ENCODE measurements at regions of chr1 and their contacts with region 1.

Region 1: GRCh38 chr1:222814536-222815439 is at the start of gene DISP1:
- DNase-seq: peak; percentile 96
- ATAC-seq: peak; percentile 74
- H3K4me3 ChIP-seq: peak within 1 kb of the TSS; percentile 67
- H3K27ac ChIP-seq: peak within 1 kb of the TSS; percentile 73
- H3K4me1 ChIP-seq: peaks cover 38% of the 10 kb centered on the region
- H3K27me3 ChIP-seq: no peaks in the 10 kb centered on the region
- CTCF ChIP-seq: no peak
- total RNA-seq, gene DISP1: 0.63 and 1.3 TPM in 2 replicates

Region 2: GRCh38 chr1:222331340-222331739 is 483.4 kb before region 1 on chr1:
- CTCF ChIA-PET with region 1: no interaction called
- POLR2A ChIA-PET with region 1: no interaction called
- intact Hi-C with region 1: no loop called
- DNase-seq: no peak
- ATAC-seq: no peak
- H3K4me3 ChIP-seq: no peak overlapping the region
- H3K27ac ChIP-seq: no peak overlapping the region
- H3K4me1 ChIP-seq: no peaks in the 10 kb centered on the region
- H3K27me3 ChIP-seq: peaks cover 2% of the 10 kb centered on the region; the same call in 1 of the 2 replicates
- CTCF ChIP-seq: no peak

Region 3: DNA sequence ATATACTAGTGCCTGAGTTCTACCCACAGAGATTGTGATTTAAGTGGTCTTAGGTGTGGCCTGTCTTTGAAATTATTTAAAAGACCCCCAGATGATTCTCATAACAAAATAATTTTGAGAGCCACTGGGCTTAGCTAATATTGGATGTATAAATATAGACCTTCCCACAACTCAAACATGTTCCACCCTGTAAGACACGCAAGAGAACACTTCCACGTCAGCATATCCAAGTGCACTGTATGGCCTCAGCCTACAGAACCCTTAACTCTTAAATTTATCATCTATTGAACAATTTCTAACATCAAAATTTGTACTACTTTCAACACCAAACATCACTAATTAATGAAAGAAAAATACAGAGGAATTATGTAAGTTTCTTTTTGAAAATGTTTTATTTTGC is 75.3 kb before region 1 on chr1:
- CTCF ChIA-PET with region 1: no interaction called
- POLR2A ChIA-PET with region 1: no interaction called
- intact Hi-C with region 1: loop called (anchors 2 kb)
- DNase-seq: no peak
- ATAC-seq: no peak
- H3K4me3 ChIP-seq: no peak overlapping the region
- H3K27ac ChIP-seq: no peak overlapping the region
- H3K4me1 ChIP-seq: peaks cover 17% of the 10 kb centered on the region
- H3K27me3 ChIP-seq: no peaks in the 10 kb centered on the region
- CTCF ChIP-seq: no peak

Region 4: GRCh38 chr1:222798116-222798515 is 16.7 kb before region 1 on chr1:
- CTCF ChIA-PET with region 1: no interaction called
- POLR2A ChIA-PET with region 1: interaction called, 11 read pairs
- intact Hi-C with region 1: loop called (anchors 2 kb)
- DNase-seq: peak; percentile 95
- ATAC-seq: peak; percentile 90
- H3K4me3 ChIP-seq: no peak overlapping the region
- H3K27ac ChIP-seq: no peak overlapping the region
- H3K4me1 ChIP-seq: peaks cover 9% of the 10 kb centered on the region
- H3K27me3 ChIP-seq: no peaks in the 10 kb centered on the region
- CTCF ChIP-seq: no peak

Region 5: DNA sequence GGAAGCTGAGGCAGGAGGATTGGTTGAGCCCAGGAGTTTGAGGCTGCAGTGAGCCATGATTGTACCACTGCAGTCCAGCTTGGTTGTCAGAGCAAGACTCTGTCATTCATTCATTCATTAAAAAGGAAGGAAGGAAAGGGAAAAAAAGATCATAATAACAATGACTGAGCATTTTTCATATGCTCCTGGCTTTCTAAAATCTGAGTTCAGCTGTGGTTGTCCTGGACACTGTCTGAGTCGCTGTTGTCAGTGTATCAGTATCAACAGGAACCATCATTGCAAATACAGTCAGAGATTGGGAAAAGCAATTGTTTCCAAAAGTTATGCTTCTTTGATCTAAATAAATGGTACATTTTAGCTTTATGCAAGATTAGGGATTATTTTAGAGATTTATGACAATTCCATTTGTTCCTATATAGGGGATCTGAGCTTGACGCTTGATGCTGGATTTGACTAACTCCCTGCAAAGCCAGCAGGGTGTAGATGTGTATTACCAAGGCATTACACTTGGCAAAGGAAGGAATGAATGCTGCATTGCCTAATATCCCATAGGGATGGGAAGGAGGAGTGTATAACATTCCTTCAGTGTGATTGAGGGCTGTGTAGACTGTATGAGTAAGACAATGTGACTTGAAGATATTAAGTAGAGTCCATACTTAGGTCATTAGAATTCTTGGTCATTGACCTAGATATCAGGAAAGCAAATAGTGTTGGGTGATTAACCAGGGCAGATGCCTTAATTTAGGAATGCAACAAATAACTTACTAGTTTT is 100.3 kb after region 1 on chr1:
- CTCF ChIA-PET with region 1: no interaction called
- POLR2A ChIA-PET with region 1: no interaction called
- intact Hi-C with region 1: loop called (anchors 1 kb)
- DNase-seq: peak; percentile 92
- ATAC-seq: peak; percentile 81
- H3K4me3 ChIP-seq: no peak overlapping the region
- H3K27ac ChIP-seq: peak overlapping the region; percentile 65
- H3K4me1 ChIP-seq: peaks cover 48% of the 10 kb centered on the region
- H3K27me3 ChIP-seq: no peaks in the 10 kb centered on the region
- CTCF ChIP-seq: peak; percentile 41; the same call in 1 of the 2 replicates

Region 6: DNA sequence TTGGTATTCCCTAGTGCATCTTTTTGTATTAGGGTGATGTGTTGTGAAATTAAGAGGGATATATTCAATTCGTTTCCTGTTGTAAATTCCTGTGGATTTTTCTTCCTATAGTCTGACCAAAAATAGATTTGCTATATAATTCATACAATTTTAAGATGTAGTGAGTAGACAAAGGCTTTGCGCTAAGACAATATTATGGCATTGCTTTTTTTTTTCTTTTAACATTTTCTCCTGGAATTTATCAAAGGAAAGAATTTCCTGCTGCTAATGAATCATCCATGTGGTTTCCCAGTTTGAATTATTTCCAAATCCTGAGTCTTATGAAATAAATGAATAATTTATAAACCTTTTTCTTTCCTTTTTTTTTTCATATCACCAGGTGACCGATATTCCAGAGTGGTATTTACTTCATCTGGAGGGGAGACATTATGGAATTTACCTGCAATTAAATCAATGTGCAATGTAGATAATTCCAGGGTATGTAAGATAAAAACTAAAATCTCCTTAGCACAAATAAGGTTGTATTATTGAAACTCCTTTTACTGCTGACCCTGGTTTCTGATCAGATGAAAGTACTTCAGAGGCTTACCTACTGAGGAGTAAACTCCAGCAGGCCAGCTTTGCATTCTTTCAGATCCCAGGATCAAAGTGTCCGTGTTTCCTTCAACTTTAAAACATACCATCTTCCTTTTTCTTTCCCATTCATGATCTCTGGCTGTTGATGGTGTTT is 179.9 kb after region 1 on chr1:
- CTCF ChIA-PET with region 1: no interaction called
- POLR2A ChIA-PET with region 1: no interaction called
- intact Hi-C with region 1: loop called (anchors 5 kb)
- DNase-seq: peak; percentile 85
- ATAC-seq: peak; percentile 86
- H3K4me3 ChIP-seq: no peak overlapping the region
- H3K27ac ChIP-seq: no peak overlapping the region
- H3K4me1 ChIP-seq: peaks cover 19% of the 10 kb centered on the region
- H3K27me3 ChIP-seq: no peaks in the 10 kb centered on the region
- CTCF ChIP-seq: no peak